Endothelial cell of umbilical vein (primary cell): ENCODE measurements at regions of chr1 and their contacts with region 1.

Region 1: DNA sequence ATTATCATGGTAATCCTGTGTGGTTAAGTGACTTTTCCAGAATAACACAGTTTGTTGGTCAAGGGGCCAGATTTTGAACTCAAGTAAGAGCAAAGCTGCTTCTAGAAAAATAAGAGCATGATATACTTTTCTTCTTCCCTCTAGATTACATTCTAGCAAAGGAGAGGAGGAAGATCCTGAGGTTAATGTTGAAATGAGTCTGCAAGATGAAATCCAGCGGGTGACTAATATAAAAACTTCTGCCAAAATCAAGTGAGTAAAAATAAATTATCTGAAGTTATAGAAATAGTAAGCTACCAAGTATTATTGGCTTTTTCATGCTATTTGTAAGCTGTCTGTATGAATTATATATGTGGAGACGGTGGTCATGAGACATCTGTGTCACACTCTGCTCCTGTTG is 12.8 kb downstream of the WDR3 start:
- DNase-seq: no peak
- H3K4me3 ChIP-seq: no peak overlapping the region
- H3K27ac ChIP-seq: no peak overlapping the region
- H3K4me1 ChIP-seq: no peaks in the 10 kb centered on the region
- H3K27me3 ChIP-seq: no peaks in the 10 kb centered on the region
- CTCF ChIP-seq: no peak
- POLR2A ChIP-seq: no peak

Region 2: GRCh38 chr1:117959364-117959763 is 17.1 kb after region 1 on chr1:
- CTCF ChIA-PET with region 1: no interaction called
- POLR2A ChIA-PET with region 1: no interaction called
- dilution Hi-C with region 1: no loop called
- intact Hi-C with region 1: no loop called
- DNase-seq: no peak
- H3K4me3 ChIP-seq: no peak overlapping the region
- H3K27ac ChIP-seq: no peak overlapping the region
- H3K4me1 ChIP-seq: no peaks in the 10 kb centered on the region
- H3K27me3 ChIP-seq: no peaks in the 10 kb centered on the region
- CTCF ChIP-seq: no peak
- POLR2A ChIP-seq: no peak

Region 3: GRCh38 chr1:117981455-117982192 is 39.3 kb after region 1 on chr1:
- CTCF ChIA-PET with region 1: no interaction called
- POLR2A ChIA-PET with region 1: no interaction called
- dilution Hi-C with region 1: no loop called
- intact Hi-C with region 1: loop called (anchors 1 kb)
- DNase-seq: no peak
- H3K4me3 ChIP-seq: no peak overlapping the region
- H3K27ac ChIP-seq: no peak overlapping the region
- H3K4me1 ChIP-seq: no peaks in the 10 kb centered on the region
- H3K27me3 ChIP-seq: peaks cover 0 to 5% of the 10 kb centered on the region in 2 experiments
- CTCF ChIP-seq: no peak
- POLR2A ChIP-seq: no peak

Region 4: DNA sequence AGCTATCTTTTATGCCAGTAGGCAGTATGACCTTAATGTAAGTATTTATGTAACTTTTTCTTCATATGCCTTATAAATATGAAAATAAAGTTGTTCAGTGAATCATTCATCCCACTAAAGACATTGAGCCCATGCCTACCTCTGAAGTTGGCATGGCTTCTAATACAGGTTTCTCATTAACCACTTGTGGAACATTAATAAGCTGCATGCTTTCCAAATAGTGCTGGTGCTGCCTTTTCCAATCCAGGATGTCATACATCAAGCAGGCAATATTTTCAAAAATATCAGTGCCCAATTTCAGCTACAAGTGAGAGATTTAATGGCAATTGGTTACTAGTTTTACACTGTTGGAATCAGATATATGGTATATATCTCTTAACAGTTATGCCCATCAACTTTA is 150.7 kb after region 1 on chr1:
- CTCF ChIA-PET with region 1: no interaction called
- POLR2A ChIA-PET with region 1: no interaction called
- dilution Hi-C with region 1: no loop called
- intact Hi-C with region 1: no loop called
- DNase-seq: no peak
- H3K4me3 ChIP-seq: no peak overlapping the region
- H3K27ac ChIP-seq: no peak overlapping the region
- H3K4me1 ChIP-seq: no peaks in the 10 kb centered on the region
- H3K27me3 ChIP-seq: no peaks in the 10 kb centered on the region
- CTCF ChIP-seq: no peak
- POLR2A ChIP-seq: no peak